AG04450 (cell line): ENCODE measurements at regions of chr12 and their contacts with region 1.

Region 1: DNA sequence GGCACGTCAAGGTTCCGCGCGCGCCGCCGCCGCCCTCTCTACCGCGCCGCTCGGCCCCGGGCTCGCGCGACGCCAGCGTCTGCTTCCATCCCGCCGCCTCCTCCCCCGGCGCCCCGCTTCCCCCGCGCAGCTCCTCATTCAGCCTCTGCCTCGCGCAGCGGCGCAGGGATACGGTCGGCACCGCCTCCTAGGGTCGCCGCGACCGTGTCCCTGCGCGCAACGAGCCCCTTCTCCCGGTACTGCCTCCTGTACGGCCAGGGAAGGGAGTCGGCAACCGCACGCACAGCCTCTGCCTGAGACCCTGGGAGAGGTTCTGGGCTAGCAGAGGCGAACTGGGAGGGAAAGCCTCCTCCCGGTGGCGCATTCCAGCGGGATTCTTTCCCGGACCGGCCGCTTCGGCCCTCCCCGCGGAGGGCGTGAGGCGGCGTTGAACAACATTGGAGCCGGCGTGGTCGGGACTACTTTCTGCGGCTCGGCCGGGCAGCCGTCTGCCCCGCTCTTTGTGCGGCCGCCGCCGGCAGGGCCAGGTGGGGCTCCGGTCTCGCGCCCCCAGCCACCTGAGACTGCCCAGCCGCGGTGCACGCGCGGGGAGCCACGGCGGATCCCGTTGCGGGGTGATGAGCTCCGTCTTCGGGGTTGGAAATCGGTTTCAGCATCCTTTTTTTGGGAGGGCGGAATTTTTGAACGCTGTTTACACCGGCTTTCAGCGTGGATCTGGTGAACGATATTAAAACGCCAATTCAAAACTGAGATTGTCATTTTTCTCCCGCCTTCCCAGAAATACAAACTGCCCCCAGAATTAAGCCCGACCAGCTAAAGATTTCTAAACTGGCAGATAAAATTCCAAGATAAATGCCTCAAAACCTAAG is at the start of gene LRP6:
- DNase-seq: peak; percentile 91
- H3K4me3 ChIP-seq: peak within 1 kb of the TSS; percentile 99
- H3K27ac ChIP-seq: peak within 1 kb of the TSS; percentile 100
- H3K27me3 ChIP-seq: no peaks in the 10 kb centered on the region
- CTCF ChIP-seq: no peak
- polyA plus RNA-seq, gene LRP6: 18.4 and 21.2 TPM in 2 replicates

Region 2: DNA sequence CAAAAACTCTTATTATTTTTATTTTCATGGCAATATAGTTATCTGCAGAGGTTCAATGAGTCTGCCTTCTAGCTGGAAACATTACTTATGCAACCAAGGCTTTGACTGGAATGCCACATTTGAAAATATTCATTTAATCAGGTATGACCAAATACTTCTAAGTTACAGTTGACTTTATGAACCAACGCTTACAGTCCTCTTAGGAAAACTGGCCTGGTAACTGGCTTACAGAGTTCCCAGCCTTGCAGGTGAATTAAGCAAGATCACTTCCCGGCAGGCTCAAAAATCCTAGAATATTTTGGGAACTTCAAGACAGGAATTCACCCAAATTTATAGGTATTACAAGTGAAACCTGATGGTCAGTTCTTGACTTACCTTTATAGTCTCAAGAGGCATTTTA is 12.6 kb before region 1 on chr12:
- CTCF ChIA-PET with region 1: no interaction called
- POLR2A ChIA-PET with region 1: interaction called, 18 read pairs
- DNase-seq: no peak
- H3K4me3 ChIP-seq: no peak overlapping the region
- H3K27ac ChIP-seq: no peak overlapping the region
- H3K27me3 ChIP-seq: no peaks in the 10 kb centered on the region
- CTCF ChIP-seq: no peak

Region 3: DNA sequence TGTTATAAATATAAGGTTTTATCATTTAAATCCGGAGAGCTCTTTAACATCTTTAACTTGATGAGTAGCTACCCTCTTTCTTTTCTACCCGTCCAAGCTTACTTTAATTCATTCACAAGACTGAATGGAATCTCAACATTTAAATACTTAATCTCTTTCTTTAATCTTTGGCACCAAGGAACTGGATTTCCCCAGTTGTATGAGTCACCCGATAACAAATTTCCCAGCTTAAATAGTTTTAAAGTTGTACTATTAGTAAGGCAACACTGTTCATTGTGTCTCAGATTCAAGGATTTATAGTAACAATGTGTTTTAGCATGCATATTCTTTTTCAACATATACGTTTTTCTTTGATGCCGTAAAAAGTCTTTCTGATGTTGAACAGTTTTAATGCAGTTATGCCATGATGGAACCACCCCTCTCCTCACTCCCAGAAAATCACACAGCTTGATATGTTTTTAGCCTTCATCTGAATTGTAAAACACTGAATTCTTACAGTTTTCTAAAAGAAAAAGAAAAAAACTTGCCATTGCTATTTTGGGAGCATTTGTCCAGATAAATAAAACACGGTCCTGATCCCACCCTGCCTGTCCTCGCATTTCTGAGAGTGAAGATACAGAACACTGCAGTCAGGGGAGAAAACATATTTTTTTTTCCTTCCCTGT is 15.8 kb after region 1 on chr12:
- CTCF ChIA-PET with region 1: no interaction called
- POLR2A ChIA-PET with region 1: interaction called, 12 read pairs
- DNase-seq: no peak
- H3K4me3 ChIP-seq: no peak overlapping the region
- H3K27ac ChIP-seq: no peak overlapping the region
- H3K27me3 ChIP-seq: no peaks in the 10 kb centered on the region
- CTCF ChIP-seq: no peak

Region 4: DNA sequence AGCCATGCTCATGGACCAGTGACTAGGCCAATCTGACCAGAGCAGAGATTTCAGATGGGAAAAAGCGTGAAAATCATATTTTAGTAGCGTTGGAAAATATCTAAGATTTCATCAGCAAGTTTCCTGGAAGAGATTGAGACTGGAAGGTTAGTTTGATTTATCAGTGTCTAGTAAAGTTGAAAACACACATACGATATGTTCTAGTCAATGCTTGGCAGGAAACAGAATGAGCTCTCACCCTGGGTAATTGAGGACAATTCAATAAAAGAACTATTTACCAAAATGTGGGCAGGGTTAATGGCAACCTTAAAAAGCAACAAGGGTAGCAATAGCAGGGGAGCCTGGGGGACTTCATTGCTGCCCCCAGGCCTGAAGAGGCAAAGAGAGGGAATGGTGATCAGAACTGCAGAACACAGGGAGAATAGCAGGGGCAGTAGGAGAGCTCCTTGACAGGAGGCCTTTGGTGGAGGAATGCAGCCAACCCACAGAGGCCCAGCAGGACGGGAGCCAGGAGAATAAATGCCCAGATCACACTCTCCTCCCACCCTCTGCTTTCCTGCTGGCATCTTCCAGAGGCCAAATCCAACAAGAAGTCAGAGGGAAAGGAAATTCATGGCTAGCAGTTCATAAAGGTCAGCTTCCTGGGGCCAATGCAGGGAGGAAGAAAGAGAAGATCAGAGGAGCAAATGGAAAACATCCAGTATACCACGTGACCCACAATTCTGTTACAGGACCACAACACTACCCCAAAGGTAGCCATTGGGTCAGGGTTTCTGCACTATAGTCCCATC is 27.3 kb after region 1 on chr12:
- CTCF ChIA-PET with region 1: no interaction called
- POLR2A ChIA-PET with region 1: no interaction called
- DNase-seq: no peak
- H3K4me3 ChIP-seq: no peak overlapping the region
- H3K27ac ChIP-seq: no peak overlapping the region
- H3K27me3 ChIP-seq: no peaks in the 10 kb centered on the region
- CTCF ChIP-seq: no peak

Region 5: DNA sequence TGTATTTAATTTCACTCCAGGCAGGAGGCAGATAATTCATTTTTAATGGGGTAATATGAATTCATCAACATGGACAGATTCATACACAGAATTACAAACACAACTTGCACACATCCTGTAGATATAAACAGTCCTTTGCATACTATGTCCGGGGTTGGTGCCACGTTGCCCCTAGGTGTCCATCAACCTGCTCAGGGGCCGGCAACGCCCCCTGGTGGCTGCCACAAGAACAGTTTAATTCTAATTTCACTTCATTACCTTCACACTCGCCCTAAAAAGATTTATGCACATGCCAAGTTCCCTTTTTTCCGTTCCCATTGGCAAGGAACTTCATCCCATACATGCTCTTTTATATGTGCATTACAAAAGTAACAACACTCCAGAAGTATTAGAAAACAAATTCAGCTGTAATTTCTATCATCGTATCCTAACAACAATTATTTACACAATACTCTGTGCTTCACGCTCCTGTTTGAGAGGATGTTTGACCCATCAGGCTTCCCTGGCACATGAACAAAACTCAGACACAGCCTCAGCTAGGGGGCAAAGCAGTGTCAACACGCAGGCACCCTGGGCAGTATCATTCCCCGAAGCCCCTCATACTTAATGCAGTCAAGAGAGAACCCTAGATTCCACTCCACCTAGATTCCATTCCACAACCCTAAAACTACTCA is 67.4 kb after region 1 on chr12:
- CTCF ChIA-PET with region 1: no interaction called
- POLR2A ChIA-PET with region 1: interaction called, 10 read pairs
- DNase-seq: no peak
- H3K4me3 ChIP-seq: no peak overlapping the region
- H3K27ac ChIP-seq: peak overlapping the region; percentile 21
- H3K27me3 ChIP-seq: no peaks in the 10 kb centered on the region
- CTCF ChIP-seq: peak; percentile 73